ENCODE measurements at regions of chr6 and their contacts with region 1.

Region 1: DNA sequence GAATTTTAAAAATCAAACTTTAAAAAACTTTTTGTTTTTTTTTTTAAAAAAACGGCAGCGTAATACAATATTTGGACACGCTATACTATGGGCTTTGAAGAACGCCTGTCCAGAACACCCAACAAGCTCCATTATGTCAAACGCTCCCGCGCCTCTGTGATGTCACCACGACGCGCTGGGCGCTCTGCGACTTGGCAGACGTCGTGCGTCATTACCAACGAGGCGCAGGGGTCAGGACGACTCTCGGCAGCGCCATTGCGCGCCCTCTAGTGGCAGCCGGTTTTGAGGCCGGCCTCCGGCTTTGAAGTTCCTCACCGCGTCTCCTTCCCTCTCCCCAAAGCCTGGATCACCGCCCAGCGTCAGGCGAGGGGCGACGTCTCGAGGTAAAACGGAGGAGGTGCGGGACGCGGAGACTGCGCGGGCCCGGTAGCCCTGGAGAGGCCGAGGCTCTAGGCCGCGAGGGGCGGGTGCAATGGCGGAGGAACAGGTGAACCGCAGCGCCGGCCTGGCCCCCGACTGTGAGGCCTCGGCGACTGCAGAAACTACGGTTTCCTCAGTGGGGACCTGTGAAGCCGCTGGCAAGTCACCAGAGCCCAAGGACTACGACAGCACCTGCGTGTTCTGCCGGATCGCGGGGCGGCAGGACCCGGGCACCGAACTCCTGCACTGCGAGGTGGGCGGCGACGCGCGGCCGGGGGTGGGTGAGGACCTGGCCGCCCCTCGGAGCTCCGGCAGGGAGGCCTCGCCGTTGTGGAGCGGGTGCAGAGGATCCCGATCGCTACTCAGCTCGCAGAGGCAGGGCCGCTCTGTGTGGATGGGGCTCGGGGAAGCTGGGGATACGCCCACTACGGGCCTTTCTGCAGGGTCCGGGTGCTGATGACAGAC is at the start of gene HINT3:
- DNase-seq: peak; percentile 99
- H3K4me3 Mint-ChIP-seq: peak within 1 kb of the TSS; percentile 58
- H3K27ac Mint-ChIP-seq: peak within 1 kb of the TSS; percentile 43
- H3K4me1 Mint-ChIP-seq: peaks cover 6% of the 10 kb centered on the region
- H3K27me3 Mint-ChIP-seq: peaks cover 4% of the 10 kb centered on the region
- total RNA-seq, gene HINT3: 9.6 to 9.8 TPM

Region 2: DNA sequence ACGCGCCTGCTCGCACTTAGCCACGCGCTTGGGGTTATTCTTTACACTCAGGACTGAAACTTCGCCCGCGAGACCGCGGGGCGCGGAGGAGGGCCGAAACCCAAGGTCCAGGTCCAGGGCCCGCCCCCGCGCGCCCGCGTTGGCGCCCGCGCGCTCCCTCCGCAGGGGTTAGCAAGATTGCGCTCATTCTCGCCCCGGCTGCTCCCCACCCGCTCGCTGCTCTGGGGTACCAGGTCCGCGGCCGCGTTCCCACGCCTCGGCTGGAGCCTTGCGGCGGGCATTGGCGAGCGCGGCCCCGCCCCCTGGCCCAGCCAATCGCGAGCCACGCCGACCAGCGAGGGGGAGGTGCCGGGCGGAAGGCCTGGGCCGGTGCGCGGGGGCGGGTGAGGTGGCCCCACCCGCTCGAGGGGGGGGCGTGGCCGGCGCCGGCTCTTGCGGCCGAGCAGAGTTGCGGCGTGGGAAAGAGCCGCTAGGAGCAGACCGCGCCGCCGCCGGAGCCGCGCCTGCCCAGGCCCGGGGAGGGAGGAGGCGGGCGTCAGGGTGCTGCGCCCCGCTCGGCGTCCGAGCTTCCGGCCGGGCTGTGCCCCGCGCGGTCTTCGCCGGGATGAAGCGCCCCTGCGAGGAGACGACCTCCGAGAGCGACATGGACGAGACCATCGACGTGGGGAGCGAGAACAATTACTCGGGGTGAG is 207.4 kb before region 1 on chr6 and contains the start of gene HEY2:
- CTCF ChIA-PET with region 1: interaction called, 6 read pairs
- POLR2A ChIA-PET with region 1: no interaction called
- intact Hi-C with region 1: loop called (anchors 1 kb)
- DNase-seq: peak; percentile 88
- H3K4me3 Mint-ChIP-seq: peak within 1 kb of the TSS; percentile 79
- H3K27ac Mint-ChIP-seq: no peak within 1 kb of the TSS
- H3K4me1 Mint-ChIP-seq: peaks cover 29% of the 10 kb centered on the region
- H3K27me3 Mint-ChIP-seq: peaks cover 67% of the 10 kb centered on the region
- total RNA-seq, gene HEY2: not detected

Region 3: GRCh38 chr6:125858427-125859320 is 98.1 kb before region 1 on chr6:
- CTCF ChIA-PET with region 1: interaction called, 7 read pairs
- POLR2A ChIA-PET with region 1: no interaction called
- intact Hi-C with region 1: loop called (anchors 2 kb)
- DNase-seq: peak; percentile 48
- H3K4me3 Mint-ChIP-seq: no peak overlapping the region
- H3K27ac Mint-ChIP-seq: no peak overlapping the region
- H3K4me1 Mint-ChIP-seq: peaks cover 11% of the 10 kb centered on the region
- H3K27me3 Mint-ChIP-seq: no peaks in the 10 kb centered on the region

Region 4: GRCh38 chr6:125906158-125906998 is 50.4 kb before region 1 on chr6:
- CTCF ChIA-PET with region 1: interaction called, 66 read pairs
- POLR2A ChIA-PET with region 1: interaction called, 6 read pairs
- intact Hi-C with region 1: loop called (anchors 1 kb)
- DNase-seq: peak; percentile 63
- H3K4me3 Mint-ChIP-seq: no peak overlapping the region
- H3K27ac Mint-ChIP-seq: peak overlapping the region; percentile 26
- H3K4me1 Mint-ChIP-seq: peaks cover 47% of the 10 kb centered on the region
- H3K27me3 Mint-ChIP-seq: no peaks in the 10 kb centered on the region

Region 5: DNA sequence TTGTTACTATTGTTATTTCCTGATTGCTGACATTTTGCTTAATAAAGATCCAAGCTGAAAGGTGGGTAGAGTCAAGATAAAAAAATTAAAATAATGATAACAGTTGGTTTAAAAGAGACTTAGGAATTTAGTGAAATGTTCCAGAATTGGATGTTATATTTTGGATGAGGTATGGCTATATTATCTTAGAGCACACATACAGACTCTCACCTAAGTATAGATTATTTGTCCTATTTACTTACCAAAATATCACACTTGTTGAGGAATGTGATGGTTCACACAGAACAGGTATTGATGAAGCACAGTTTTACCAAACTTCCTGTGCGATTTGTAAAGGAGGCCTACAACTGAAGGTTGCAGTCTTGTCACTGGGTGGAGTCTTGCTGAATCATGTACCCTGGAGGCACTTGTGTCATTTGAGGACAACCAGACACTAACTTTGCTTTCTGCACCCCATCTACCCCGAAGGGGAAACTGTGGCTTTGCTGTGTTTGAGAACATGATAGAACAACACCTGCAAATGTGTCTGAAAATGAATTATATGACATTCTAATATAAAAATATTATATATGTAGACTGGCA is 32.7 kb before region 1 on chr6:
- CTCF ChIA-PET with region 1: interaction called, 41 read pairs
- POLR2A ChIA-PET with region 1: no interaction called
- intact Hi-C with region 1: loop called (anchors 1 kb)
- DNase-seq: no peak
- H3K4me3 Mint-ChIP-seq: no peak overlapping the region
- H3K27ac Mint-ChIP-seq: no peak overlapping the region
- H3K4me1 Mint-ChIP-seq: peaks cover 31% of the 10 kb centered on the region
- H3K27me3 Mint-ChIP-seq: no peaks in the 10 kb centered on the region

Region 6: DNA sequence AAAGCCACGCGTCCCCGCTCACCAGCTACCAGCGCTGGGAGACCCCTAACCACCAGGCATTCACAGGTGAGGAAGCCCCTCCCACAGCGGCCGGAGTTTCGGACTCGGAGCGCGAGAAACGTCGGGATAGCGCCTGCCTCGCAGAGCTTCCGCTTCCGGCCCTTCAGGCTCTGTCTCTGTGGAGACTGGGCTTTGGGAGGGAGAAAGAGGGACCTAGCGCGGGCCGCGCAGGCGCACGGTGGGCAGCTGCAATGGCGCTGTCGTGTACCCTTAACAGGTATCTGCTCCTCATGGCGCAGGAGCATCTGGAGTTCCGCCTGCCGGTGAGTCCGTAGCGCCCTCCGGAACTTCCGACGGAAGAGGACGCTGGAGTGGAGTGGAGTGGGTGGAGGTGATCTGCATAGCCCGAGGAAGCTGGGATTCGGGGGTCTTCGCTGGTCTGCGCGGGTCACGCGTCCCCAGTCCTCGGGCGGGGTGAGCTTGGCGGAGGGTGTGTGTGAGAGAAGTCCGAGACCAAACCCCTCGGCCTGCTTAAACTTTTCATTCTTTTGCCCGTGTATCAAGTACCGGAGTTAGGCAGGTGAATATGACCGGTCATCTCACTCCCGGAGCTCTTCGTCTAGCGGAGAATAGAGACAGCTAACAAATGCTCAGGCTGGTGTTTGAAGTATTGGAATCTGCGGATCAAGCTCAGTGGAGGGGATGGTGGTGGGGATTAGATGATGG is 29.7 kb after region 1 on chr6 and contains the start of gene TRMT11:
- CTCF ChIA-PET with region 1: interaction called, 30 read pairs
- POLR2A ChIA-PET with region 1: interaction called, 9 read pairs
- intact Hi-C with region 1: loop called (anchors 2 kb)
- DNase-seq: peak; percentile 90
- H3K4me3 Mint-ChIP-seq: peak within 1 kb of the TSS; percentile 9
- H3K27ac Mint-ChIP-seq: no peak within 1 kb of the TSS
- H3K4me1 Mint-ChIP-seq: peaks cover 20% of the 10 kb centered on the region
- H3K27me3 Mint-ChIP-seq: no peaks in the 10 kb centered on the region
- total RNA-seq, gene TRMT11: 42.8 to 46.9 TPM

Region 7: DNA sequence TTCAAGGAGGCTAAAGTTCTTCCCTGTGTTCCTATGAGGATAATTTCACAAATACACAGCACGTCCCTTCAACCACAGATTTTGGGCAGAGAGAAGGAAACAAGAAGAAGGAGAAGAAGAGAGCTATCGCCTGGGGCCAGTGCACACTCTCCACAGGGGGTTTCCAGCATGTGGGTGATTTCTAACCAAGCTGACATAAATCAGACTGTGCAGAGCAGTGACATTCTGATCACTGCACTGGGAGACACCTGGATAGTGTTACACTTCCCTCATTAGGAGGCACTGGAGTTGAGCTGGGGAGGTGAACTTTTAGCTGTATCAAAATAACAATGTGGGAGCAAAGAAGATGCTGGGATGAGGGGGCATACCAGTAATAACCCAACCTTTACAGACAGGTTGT is 311.3 kb after region 1 on chr6:
- CTCF ChIA-PET with region 1: no interaction called
- POLR2A ChIA-PET with region 1: no interaction called
- intact Hi-C with region 1: no loop called
- DNase-seq: no peak
- H3K4me3 Mint-ChIP-seq: no peak overlapping the region
- H3K27ac Mint-ChIP-seq: no peak overlapping the region
- H3K4me1 Mint-ChIP-seq: no peaks in the 10 kb centered on the region
- H3K27me3 Mint-ChIP-seq: no peaks in the 10 kb centered on the region

Measured in activated CD4-positive, alpha-beta memory T cell treated with anti-CD3 and anti-CD28 coated beads for 36 hours (primary cell).